Sigmoid colon (tissue), 7 donors: ENCODE measurements at regions of chr14 and their contacts with region 1.

Region 1: DNA sequence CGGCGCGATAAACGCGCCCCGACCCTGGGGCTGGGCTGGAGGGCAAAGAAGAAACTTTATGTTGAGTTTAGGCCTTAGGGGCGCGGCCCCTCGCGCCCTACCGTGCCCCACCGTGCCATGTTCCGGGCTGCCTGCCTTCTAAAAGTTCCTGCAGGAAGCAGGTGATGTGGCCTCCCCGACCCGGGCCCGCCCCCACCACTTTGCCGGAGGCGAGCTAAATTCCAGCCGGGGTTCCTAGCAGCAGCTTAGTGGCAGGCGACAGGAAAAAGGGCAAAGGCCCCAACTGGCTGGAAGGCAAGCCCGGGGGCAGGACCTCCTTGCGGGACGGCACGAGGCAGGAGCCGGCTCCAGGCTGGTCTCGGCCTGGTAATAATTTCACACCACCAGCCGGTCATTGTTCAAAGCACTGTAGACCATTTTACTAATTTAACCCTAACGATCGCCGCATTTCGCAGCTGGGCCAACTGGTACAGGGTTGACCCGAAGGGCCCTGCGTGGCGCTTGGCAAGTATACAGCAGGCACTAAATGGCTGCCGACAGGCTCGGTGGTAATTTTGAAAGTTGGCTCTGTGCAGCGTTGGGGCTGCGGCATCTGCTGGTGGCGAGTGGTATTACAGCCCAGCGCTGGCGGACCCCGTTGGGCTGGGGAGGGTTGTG is 895 bp upstream of the CCDC88C start:
- DNase-seq: no peak
- H3K4me3 ChIP-seq: peak overlapping the region; percentile 6 to 61 (median 56)
- H3K27ac ChIP-seq: peak overlapping the region in 2 of 4 donors; percentile 21 to 49
- H3K4me1 ChIP-seq: peaks cover 0 to 21% (median 17%) of the 10 kb centered on the region in 4 donors
- H3K27me3 ChIP-seq: peaks cover 6 to 23% (median 18%) of the 10 kb centered on the region in 3 donors
- CTCF ChIP-seq: peak; percentile 95 to 99 (median 99)
- EP300 ChIP-seq: no peak
- POLR2A ChIP-seq: no peak

Region 2: GRCh38 chr14:91323671-91324605 is 94.6 kb before region 1 on chr14:
- intact Hi-C with region 1: loop called (anchors 1 kb)
- DNase-seq: peak; percentile 92
- H3K4me3 ChIP-seq: peak overlapping the region; percentile 13 to 40 (median 36)
- H3K27ac ChIP-seq: peak overlapping the region; percentile 10 to 60 (median 39)
- H3K4me1 ChIP-seq: peaks cover 0 to 11% (median 5%) of the 10 kb centered on the region in 4 donors
- H3K27me3 ChIP-seq: no peaks in the 10 kb centered on the region
- CTCF ChIP-seq: peak; percentile 83 to 97 (median 95)
- EP300 ChIP-seq: no peak
- POLR2A ChIP-seq: no peak

Region 3: GRCh38 chr14:91350813-91351511 is 67.6 kb before region 1 on chr14:
- intact Hi-C with region 1: loop called (anchors 2 kb)
- DNase-seq: no peak
- H3K4me3 ChIP-seq: peak overlapping the region in 3 of 4 donors; percentile 34 to 44 (median 37)
- H3K27ac ChIP-seq: peak overlapping the region; percentile 30 to 62 (median 58)
- H3K4me1 ChIP-seq: peaks cover 0 to 26% (median 19%) of the 10 kb centered on the region in 4 donors
- H3K27me3 ChIP-seq: no peaks in the 10 kb centered on the region
- CTCF ChIP-seq: no peak
- EP300 ChIP-seq: no peak
- POLR2A ChIP-seq: no peak